ENCODE measurements at regions of chr7 and their contacts with region 1.

Region 1: GRCh38 chr7:73701357-73701995 is 18.0 kb downstream of the STX1A start:
- DNase-seq: no peak
- H3K4me3 ChIP-seq: no peak overlapping the region
- CTCF ChIP-seq: peak; percentile 66

Region 2: GRCh38 chr7:73593207-73594045 is 108.0 kb before region 1 on chr7:
- CTCF ChIA-PET with region 1: no interaction called
- POLR2A ChIA-PET with region 1: no interaction called
- DNase-seq: no peak
- H3K4me3 ChIP-seq: no peak overlapping the region
- CTCF ChIP-seq: no peak

Region 3: GRCh38 chr7:73615886-73616285 is 85.6 kb before region 1 on chr7:
- CTCF ChIA-PET with region 1: no interaction called
- POLR2A ChIA-PET with region 1: no interaction called
- DNase-seq: no peak
- H3K4me3 ChIP-seq: no peak overlapping the region
- CTCF ChIP-seq: peak; percentile 28

Region 4: DNA sequence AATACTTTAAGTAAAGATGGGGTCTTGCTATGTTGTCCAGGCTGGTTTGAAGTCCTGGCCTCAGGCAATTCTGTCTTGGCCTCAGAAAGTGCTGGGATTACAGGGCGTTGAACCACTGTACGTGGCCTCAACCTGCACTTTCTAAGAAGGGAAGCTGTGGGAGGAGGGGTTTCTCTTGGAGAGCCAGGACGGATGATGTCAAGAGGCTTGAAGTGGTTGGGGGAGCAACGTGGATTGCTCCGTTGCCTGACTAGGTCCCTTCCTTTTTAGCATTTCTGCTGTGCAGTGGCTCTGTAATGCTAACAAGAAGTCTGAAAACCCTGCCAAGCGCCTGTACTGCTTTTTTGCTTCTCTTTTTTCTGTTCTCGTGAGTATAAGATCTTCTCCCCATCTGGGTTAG is 10.8 kb before region 1 on chr7:
- CTCF ChIA-PET with region 1: interaction called, 25 read pairs
- POLR2A ChIA-PET with region 1: no interaction called
- DNase-seq: no peak
- H3K4me3 ChIP-seq: no peak overlapping the region
- CTCF ChIP-seq: no peak

Region 5: DNA sequence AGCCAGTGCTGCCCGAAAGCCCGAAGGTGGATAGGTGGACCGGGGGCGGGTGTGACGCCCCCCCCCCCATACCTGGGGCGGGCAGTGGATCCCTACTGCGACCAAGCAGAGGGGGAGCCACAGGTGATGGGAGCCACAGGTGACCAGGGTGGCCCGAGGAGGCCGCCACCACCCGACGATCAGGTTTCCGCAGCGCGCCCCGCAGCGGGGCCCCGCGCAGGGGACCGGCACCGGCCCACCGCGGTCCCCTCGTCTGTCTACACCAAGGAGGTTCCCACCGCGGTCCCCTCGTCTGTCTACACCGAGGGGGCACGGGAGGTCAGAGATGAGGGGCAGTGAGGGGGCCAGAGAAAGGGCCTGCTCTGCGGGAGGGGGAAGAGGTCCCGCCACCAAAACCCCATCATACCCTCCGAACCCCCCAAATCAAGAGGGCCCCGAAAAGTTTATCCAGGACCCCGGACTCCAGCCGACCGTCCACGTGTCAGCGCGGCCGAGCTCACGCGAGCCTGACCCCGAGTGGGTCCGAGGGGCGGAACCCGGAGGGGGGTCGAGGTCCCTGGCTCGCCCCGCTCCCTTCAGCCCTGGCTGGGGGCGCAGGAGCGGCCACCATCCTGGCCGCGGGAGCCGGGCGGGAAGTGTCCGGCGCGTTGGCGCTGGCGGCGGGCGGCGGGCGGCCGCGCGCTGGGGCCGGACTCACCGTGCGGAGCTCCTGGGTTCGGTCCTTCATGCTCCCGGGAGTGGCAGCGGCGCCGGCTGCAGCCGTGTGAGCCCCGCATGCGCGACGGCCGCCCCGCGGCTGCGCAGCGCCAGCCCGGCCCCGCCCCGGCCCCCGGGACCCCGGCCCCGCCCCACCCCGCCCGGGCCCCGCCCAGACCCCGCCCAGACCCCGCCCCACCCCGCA is 17.7 kb after region 1 on chr7 and contains the start of gene STX1A:
- CTCF ChIA-PET with region 1: interaction called, 8 read pairs
- POLR2A ChIA-PET with region 1: interaction called, 47 read pairs
- DNase-seq: no peak
- H3K4me3 ChIP-seq: peak within 1 kb of the TSS; percentile 75
- CTCF ChIP-seq: no peak

Measured in AG04449 (cell line).